Lower lobe of right lung (tissue), 2 donors: ENCODE measurements at regions of chr6 and their contacts with region 1.

Region 1: GRCh38 chr6:15621203-15622044 is 41.4 kb downstream of the DTNBP1 start:
- DNase-seq: peak; percentile 75
- ATAC-seq: peak; percentile 89 to 90
- H3K4me3 ChIP-seq: no peak overlapping the region
- H3K27ac ChIP-seq: peak overlapping the region; percentile 61
- H3K4me1 ChIP-seq: peaks cover 34% of the 10 kb centered on the region
- H3K27me3 ChIP-seq: no peaks in the 10 kb centered on the region
- CTCF ChIP-seq: no peak

Region 2: DNA sequence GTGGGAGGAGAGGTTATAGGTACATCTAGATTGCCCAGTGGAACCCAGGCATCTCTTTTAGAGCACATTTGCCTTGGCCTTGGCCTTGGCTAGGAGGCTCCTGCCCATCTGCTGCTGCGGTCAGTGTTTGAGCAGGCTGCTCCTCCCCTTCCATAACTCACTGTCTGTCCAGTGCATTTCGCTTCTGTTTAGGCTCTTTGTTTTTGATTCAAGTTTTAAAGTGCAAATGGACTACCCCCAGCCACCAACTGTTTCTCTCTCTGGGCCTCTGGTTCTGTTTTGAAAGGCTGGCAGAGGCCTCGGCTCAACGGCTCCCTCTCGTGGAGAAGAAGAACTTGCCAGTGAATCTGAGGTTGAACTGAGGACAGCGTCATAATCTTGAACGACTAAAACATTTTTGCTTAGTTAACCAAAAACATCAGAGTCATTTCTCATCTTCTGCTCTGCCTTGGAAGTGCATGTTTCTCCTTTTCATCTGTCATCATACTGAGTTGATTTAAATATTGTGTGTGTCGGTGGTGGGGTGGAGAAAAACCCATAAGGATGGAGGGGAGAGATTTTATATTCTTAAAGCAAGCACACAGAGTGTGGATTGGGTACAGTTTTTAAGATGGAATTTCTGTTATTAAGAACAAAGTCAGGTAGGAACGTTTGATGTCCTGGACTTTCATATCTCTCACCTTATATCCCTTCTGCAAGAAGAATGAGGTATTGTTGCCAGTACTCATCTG is 130.0 kb before region 1 on chr6:
- intact Hi-C with region 1: loop called (anchors 10 kb)
- DNase-seq: peak; percentile 72
- ATAC-seq: peak; percentile 80 to 85
- H3K4me3 ChIP-seq: no peak overlapping the region
- H3K27ac ChIP-seq: peak overlapping the region; percentile 1
- H3K4me1 ChIP-seq: peaks cover 22% of the 10 kb centered on the region
- H3K27me3 ChIP-seq: no peaks in the 10 kb centered on the region
- CTCF ChIP-seq: peak; percentile 91

Region 3: GRCh38 chr6:15522427-15522826 is 99.0 kb before region 1 on chr6:
- intact Hi-C with region 1: no loop called
- DNase-seq: no peak
- ATAC-seq: peak in 1 of 2 donors; percentile 43
- H3K4me3 ChIP-seq: no peak overlapping the region
- H3K27ac ChIP-seq: no peak overlapping the region
- H3K4me1 ChIP-seq: peaks cover 11% of the 10 kb centered on the region
- H3K27me3 ChIP-seq: no peaks in the 10 kb centered on the region
- CTCF ChIP-seq: no peak

Region 4: GRCh38 chr6:15708231-15708630 is 86.8 kb after region 1 on chr6:
- intact Hi-C with region 1: no loop called
- DNase-seq: no peak
- ATAC-seq: no peak
- H3K4me3 ChIP-seq: no peak overlapping the region
- H3K27ac ChIP-seq: no peak overlapping the region
- H3K4me1 ChIP-seq: no peaks in the 10 kb centered on the region
- H3K27me3 ChIP-seq: no peaks in the 10 kb centered on the region
- CTCF ChIP-seq: no peak